ENCODE measurements at regions of chr3 and their contacts with region 1.

Region 1: DNA sequence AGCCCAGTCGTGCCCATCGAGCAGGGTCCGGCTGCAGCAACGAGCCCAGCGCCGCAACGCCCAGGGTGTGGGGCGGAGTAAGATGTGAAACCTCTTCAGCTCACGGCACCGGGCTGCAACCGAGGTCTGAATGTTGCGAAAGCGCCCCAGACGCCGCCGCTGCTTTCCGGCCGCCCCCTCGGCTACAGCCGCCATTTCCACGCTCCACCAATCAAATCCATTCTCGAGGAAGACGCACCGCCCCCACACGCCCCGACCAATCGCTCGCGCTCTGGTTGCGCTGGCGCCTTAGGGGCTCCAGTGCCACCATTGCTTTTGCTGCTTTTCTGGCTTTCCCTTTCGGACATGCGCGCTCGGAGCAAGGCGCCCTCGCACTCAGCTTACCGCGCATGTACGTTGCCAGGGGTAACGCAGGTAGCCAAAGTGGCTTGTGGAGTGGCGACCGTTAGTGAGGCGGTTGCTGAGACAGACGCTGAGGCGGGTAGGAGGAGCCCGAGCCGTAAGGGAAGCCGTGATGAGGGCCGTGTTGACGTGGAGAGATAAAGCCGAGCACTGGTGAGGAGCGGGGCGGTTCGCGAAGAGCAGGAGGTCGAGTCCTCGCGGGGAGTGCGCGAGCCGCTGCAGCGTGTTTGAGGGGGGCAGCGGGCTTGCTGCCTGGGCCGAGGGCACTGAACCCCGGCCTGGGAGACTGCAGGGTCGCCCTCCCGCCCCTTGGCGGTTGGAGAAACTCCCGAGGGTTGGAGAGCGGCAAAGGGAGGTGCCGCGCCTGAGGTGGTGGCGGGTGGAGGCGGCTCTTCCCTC is at the starts of genes IFT122 and MBD4:
- DNase-seq: peak; percentile 99
- H3K4me3 ChIP-seq: peak within 1 kb of the TSS; percentile 88
- H3K27ac ChIP-seq: peak within 1 kb of the TSS; percentile 84
- H3K4me1 ChIP-seq: peaks cover 53% of the 10 kb centered on the region
- CTCF ChIP-seq: no peak
- total RNA-seq, gene IFT122: 21.6 and 25.8 TPM in 2 replicates
- total RNA-seq, gene MBD4: 42.4 and 46.3 TPM in 2 replicates

Region 2: DNA sequence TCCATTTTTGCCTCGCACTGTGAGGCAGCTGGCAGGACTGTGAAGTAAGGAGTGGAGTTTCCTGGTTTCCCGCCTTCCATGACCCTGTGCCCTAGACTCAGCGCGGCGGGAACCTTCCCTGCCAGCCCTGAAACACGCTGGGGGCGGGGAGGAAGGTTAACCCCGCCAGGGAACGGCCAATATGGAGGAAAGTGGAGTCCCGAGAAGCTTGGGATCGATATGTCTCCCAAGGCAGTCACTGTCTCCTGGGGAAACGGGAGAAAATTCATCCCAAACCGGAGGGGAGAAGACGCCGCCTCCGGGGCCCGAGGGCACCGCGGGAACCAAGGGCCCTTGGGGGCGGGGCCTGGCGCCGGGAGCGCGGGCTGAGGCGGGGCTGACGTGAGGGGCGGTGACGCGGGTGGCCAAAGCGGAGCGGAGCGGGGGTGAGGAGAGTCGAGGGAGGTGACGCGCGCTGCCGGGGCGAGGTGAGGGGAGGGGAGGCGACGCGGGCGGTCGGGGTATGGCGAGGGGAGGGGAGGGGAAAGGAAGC is 161.5 kb before region 1 on chr3 and contains the start of gene HMCES:
- CTCF ChIA-PET with region 1: no interaction called
- POLR2A ChIA-PET with region 1: interaction called, 3 read pairs
- intact Hi-C with region 1: loop called (anchors 2 kb)
- DNase-seq: peak; percentile 95
- H3K4me3 ChIP-seq: peak within 1 kb of the TSS; percentile 93
- H3K27ac ChIP-seq: peak within 1 kb of the TSS; percentile 94
- H3K4me1 ChIP-seq: peaks cover 77% of the 10 kb centered on the region
- CTCF ChIP-seq: no peak
- total RNA-seq, gene HMCES: 90.6 and 104 TPM in 2 replicates

Region 3: DNA sequence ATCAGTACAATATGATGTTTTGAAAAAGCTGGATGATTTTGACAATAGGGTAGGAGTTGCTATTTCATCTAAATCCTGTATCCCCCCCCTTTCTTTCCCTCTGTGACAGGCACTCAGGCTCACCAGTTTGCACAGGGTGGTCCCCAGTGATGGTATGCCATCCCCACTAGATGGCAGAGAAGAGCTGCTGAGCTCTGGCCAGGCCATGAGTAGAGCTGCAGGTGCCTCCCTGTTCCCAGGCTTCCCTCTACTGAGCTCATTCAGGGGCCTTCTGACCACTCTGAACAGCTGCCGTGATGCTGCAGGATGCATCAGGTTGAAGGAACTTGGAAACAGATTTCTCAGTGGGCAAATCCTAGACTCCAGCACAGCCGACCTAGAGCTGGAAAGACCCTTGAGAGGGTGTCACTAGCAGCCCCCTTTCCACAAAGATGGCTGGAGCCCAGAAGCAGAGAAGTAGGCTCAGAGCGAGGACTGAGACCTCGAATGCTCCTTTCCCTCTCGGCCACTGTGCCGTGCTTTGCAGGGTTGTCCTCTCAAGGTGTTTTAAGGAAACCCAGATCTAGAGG is 56.6 kb before region 1 on chr3:
- CTCF ChIA-PET with region 1: interaction called, 16 read pairs
- POLR2A ChIA-PET with region 1: interaction called, 4 read pairs
- intact Hi-C with region 1: loop called (anchors 2 kb)
- DNase-seq: peak; percentile 82
- H3K4me3 ChIP-seq: no peak overlapping the region
- H3K27ac ChIP-seq: no peak overlapping the region
- H3K4me1 ChIP-seq: no peaks in the 10 kb centered on the region
- CTCF ChIP-seq: peak; percentile 93

Region 4: DNA sequence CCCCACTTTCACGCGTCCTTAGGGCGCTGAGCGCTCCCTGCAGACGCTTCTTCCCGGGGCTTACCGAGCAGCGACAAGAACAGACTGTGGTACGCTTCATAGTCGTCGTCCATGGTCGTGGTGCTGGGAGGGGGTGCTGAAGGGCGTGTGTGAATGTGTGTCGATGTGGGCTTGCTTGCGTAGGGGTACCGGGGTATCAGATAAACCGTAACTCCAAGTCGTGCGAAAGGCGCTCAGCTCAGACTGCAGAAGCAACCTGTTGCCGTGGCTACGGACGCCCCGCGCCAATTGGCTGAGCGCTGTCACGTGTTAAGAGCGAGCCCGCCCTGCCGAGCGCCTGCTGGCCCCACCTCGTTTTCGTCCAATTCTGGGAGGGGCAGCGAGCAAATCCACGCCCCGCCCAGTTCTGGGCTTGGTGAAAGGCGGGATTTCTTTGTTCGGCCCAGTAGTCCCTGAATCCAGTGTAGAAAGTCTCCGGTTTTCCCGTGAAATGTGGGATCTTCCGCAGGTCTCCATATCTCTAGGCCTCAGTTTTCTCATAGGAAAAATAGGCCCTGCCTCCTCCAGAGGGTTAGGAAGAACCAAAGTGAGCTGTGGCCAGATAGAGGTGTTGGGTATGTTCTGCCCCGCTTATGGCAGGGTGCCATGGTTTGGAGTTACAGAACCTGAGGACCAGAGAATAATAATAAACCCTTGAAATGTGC is 11.5 kb before region 1 on chr3 and contains the start of gene EFCAB12:
- CTCF ChIA-PET with region 1: no interaction called
- POLR2A ChIA-PET with region 1: interaction called, 54 read pairs
- intact Hi-C with region 1: no loop called
- DNase-seq: peak; percentile 70
- H3K4me3 ChIP-seq: no peak within 1 kb of the TSS
- H3K27ac ChIP-seq: peak within 1 kb of the TSS; percentile 16
- H3K4me1 ChIP-seq: peaks cover 33% of the 10 kb centered on the region
- CTCF ChIP-seq: no peak
- total RNA-seq, gene EFCAB12: 0.36 and 1.1 TPM in 2 replicates

Region 5: GRCh38 chr3:129893581-129894070 is 453.6 kb after region 1 on chr3 and contains the start of gene TMCC1:
- CTCF ChIA-PET with region 1: no interaction called
- POLR2A ChIA-PET with region 1: interaction called, 3 read pairs
- intact Hi-C with region 1: loop called (anchors 10 kb)
- DNase-seq: peak; percentile 94
- H3K4me3 ChIP-seq: peak within 1 kb of the TSS; percentile 85
- H3K27ac ChIP-seq: peak within 1 kb of the TSS; percentile 86
- H3K4me1 ChIP-seq: peaks cover 41% of the 10 kb centered on the region
- CTCF ChIP-seq: no peak
- total RNA-seq, gene TMCC1: 24.0 and 31.7 TPM in 2 replicates

Measured in OCI-LY7 (cell line).